Activated B cell treated with CpG ODN at 0.5 μM for 24 hours (primary cell): ENCODE measurements at regions of chr1 and their contacts with region 1.

Region 1: GRCh38 chr1:25549273-25550154 is 6.1 kb downstream of the LDLRAP1 start:
- DNase-seq: peak; percentile 68
- ATAC-seq: peak; percentile 99
- H3K4me3 Mint-ChIP-seq: peak overlapping the region; percentile 78
- H3K27ac Mint-ChIP-seq: peak overlapping the region; percentile 92
- H3K4me1 Mint-ChIP-seq: peaks cover 64% of the 10 kb centered on the region
- H3K27me3 Mint-ChIP-seq: no peaks in the 10 kb centered on the region
- CTCF ChIP-seq: no peak

Region 2: GRCh38 chr1:25520446-25521061 is 29.0 kb before region 1 on chr1:
- CTCF ChIA-PET with region 1: interaction called, 5 read pairs
- POLR2A ChIA-PET with region 1: no interaction called
- intact Hi-C with region 1: loop called (anchors 1 kb)
- DNase-seq: peak; percentile 39
- ATAC-seq: peak; percentile 51
- H3K4me3 Mint-ChIP-seq: no peak overlapping the region
- H3K27ac Mint-ChIP-seq: no peak overlapping the region
- H3K4me1 Mint-ChIP-seq: peaks cover 9% of the 10 kb centered on the region
- H3K27me3 Mint-ChIP-seq: peaks cover 7% of the 10 kb centered on the region
- CTCF ChIP-seq: no peak

Region 3: DNA sequence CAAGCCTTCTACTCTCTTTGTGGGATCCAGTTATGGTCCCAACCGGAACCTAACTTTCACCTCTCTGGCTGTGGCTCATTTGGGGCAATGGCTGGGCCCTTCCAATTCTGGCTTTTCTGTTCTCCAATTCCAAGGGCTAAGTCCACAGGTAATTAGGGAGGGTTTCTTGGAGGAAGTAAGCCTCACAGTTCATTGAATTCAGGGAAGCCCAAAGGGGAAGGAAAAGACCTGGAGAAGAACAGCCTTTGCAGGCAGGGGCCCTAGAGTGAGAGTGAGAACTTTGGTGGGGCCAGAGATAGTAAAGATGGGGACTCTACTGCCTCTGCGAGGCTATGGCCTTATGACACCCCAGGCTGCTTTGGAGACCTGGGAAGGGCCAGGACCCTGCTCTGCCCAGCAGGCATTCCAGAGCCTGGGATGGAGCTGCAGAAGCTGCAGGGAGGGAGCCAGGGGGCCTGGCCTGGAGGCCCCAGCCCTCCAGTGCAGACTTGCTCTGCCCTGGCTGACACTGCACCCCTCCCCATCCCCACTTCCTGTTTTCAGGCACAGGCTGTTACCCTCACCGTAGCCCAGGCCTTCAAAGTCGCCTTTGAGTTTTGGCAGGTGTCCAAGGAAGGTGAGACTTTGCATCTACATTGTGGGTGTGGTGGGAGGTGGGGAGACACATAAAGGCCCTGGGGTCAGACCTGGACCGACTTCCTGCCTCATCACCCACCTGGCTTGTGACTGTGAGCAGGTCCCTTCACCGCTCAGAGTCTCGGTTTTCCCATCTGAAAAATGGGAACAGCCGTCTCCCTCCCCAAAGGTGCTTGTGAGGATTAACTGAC is 12.8 kb after region 1 on chr1:
- CTCF ChIA-PET with region 1: no interaction called
- POLR2A ChIA-PET with region 1: interaction called, 7 read pairs
- intact Hi-C with region 1: loop called (anchors 1 kb)
- DNase-seq: peak; percentile 43
- ATAC-seq: peak; percentile 94
- H3K4me3 Mint-ChIP-seq: no peak overlapping the region
- H3K27ac Mint-ChIP-seq: peak overlapping the region; percentile 85
- H3K4me1 Mint-ChIP-seq: peaks cover 57% of the 10 kb centered on the region
- H3K27me3 Mint-ChIP-seq: no peaks in the 10 kb centered on the region
- CTCF ChIP-seq: no peak

Region 4: DNA sequence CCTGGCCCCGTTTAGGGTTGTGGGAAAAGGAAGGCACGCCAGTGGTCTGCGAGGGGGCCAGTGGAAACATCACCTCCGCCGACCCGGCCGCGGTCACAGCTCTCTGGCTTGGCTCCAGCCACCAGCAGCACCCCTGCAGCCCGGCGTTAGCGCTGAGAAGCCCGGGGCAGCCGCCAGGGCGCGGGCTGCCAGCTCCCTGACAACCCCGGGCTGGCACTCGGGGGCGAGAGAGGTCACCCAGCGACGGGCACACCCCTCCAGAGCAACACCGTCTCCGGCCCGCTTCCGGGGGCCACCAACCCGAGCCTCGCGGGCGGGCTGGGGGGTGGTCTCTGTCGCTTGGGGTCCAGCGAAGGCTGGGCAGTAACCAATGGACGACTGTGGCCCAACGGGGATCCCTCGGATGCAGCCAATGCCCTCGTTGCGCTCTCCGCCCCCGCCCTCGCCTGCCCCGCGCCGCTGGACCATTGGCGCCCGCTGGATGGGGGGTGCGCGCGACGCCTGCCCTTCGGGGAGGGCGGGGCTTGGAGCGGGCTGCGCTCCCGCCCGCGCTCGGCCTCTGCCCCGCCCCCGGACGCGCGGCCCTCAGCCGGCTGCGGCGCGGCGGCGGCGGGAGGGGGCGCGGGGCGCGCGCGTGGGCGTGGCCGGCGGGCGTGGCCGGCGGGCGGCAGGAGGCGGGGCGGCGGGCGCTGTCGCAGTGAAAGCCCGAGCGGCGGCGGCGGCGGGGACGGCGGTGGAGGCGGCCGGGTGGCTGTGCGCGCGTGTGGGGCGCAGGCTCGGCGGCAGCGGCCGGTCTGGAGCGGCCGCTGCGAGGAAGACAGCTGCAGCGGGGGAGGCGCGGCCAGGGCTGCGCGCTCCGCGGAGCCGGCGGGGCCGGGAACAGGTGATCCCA is 66.8 kb after region 1 on chr1 and contains the start of gene MAN1C1:
- CTCF ChIA-PET with region 1: no interaction called
- POLR2A ChIA-PET with region 1: interaction called, 3 read pairs
- intact Hi-C with region 1: loop called (anchors 2 kb)
- DNase-seq: peak; percentile 88
- ATAC-seq: peak; percentile 93
- H3K4me3 Mint-ChIP-seq: peak within 1 kb of the TSS; percentile 69
- H3K27ac Mint-ChIP-seq: no peak within 1 kb of the TSS
- H3K4me1 Mint-ChIP-seq: peaks cover 25% of the 10 kb centered on the region
- H3K27me3 Mint-ChIP-seq: peaks cover 34% of the 10 kb centered on the region
- CTCF ChIP-seq: no peak
- total RNA-seq, gene MAN1C1: 0.20 and 0.34 TPM in 2 replicates